Pancreas (tissue), 10 donors: ENCODE measurements at regions of chr14 and their contacts with region 1.

Region 1: GRCh38 chr14:99266181-99267178 is 5.5 kb downstream of the BCL11B start:
- DNase-seq: peak; percentile 28 to 91 (median 76)
- ATAC-seq: peak; percentile 85 to 98 (median 94)
- H3K4me3 ChIP-seq: no peak overlapping the region
- H3K27ac ChIP-seq: no peak overlapping the region
- H3K4me1 ChIP-seq: peaks cover 0 to 3% (median 2%) of the 10 kb centered on the region in 3 donors
- H3K27me3 ChIP-seq: peaks cover 0 to 35% (median 2%) of the 10 kb centered on the region in 4 donors
- CTCF ChIP-seq: peak; percentile 85 to 92 (median 90)

Region 2: DNA sequence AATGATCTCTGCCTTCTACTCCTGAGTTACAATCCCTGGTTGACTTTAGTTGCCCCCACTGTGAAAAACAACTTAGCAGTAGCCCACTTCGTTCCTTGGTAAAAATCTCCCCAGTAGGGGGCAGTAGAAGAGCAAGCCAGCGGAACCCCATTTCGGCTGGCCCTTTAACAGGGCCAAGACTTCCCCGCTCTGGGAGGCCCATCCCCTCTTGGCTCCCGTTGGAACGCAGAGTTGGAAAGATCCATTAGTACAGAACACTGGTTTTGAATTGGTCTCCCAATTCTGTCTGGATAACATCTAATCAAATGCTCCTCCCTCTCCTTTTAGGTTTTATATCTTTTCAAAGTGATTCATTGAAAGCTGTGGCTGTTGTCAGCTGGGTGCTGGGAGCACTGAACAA is 1127.8 kb before region 1 on chr14:
- intact Hi-C with region 1: loop called in 2 of 3 experiments (anchors 10 kb)
- DNase-seq: peak in 2 of 6 donors; percentile 16 to 23
- ATAC-seq: peak in 3 of 4 donors; percentile 44 to 72 (median 56)
- H3K4me3 ChIP-seq: no peak overlapping the region
- H3K27ac ChIP-seq: no peak overlapping the region
- H3K4me1 ChIP-seq: no peaks in the 10 kb centered on the region
- H3K27me3 ChIP-seq: no peaks in the 10 kb centered on the region
- CTCF ChIP-seq: peak in 3 of 4 donors; percentile 34 to 43 (median 34)

Region 3: DNA sequence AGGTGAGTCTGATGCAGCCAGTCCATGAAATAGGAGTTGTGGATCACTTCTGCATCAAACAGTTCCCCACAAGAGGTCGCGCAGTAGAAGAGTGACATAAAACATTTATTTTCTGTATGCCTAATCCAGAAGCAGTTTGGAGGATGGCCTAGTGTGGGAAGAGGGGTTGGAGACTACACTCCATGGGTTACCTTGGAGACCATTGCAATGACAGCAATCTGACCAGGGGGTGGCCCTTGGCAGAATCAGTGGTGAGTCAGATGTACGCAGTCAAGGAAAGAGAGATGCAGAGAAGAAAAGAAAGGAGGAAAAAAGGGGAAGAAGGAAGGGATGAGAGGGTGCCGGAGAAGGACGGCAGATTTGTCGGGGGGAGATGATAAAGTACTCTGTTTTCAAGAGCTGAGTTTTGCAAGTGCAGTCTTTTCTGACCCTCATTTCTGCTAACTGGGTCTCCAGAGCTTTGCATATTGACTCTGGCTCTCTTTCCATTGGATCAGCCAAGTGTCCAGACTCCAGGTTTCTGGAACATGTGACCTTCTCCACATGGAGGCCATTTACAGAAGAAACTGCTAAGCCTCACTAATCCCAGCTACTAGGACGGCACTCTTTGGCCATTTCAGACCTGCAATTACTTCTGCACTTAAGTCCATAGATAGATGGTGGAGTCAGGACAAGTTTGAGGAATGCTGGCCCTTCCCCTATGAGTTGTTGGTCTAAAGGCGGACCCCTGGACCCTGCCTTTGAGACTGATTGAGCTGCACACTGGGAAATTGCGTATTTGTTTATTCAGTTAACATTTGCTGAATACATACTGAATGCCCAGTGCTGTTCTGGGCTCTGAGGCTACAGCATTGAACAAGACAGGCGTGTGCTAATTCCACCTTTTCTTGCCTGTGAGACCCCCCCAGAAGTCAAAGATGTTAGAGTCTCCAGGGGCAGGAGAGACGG is 418.7 kb before region 1 on chr14:
- intact Hi-C with region 1: no loop called
- DNase-seq: no peak
- ATAC-seq: no peak
- H3K4me3 ChIP-seq: no peak overlapping the region
- H3K27ac ChIP-seq: no peak overlapping the region
- H3K4me1 ChIP-seq: no peaks in the 10 kb centered on the region
- H3K27me3 ChIP-seq: no peaks in the 10 kb centered on the region
- CTCF ChIP-seq: no peak

Region 4: DNA sequence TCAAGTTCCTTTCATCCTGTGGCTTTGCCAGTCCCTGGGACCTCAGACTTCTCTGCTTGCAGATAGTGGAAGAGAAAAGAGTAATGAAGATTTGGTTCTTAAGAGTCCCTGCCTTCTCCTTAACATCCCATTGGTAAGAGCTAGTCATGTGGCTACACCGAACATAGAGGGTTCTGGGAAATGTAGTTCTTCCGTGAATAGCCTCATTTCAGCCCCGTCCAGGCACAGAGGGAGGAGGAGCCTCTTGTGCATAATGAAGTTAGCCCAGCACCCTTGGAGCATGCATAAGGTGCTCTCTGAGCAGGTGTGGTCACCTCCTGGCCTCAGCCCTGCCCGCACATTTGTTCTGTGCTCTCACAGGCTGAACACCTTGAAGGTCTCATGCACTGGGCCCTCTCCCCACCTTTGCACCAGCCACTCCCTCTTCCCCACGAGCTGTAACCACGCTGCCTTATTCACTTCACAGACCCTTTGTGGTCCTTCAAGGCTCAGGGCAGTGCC is 128.4 kb before region 1 on chr14:
- intact Hi-C with region 1: no loop called
- DNase-seq: no peak
- ATAC-seq: no peak
- H3K4me3 ChIP-seq: no peak overlapping the region
- H3K27ac ChIP-seq: no peak overlapping the region
- H3K4me1 ChIP-seq: no peaks in the 10 kb centered on the region
- H3K27me3 ChIP-seq: no peaks in the 10 kb centered on the region
- CTCF ChIP-seq: no peak

Region 5: DNA sequence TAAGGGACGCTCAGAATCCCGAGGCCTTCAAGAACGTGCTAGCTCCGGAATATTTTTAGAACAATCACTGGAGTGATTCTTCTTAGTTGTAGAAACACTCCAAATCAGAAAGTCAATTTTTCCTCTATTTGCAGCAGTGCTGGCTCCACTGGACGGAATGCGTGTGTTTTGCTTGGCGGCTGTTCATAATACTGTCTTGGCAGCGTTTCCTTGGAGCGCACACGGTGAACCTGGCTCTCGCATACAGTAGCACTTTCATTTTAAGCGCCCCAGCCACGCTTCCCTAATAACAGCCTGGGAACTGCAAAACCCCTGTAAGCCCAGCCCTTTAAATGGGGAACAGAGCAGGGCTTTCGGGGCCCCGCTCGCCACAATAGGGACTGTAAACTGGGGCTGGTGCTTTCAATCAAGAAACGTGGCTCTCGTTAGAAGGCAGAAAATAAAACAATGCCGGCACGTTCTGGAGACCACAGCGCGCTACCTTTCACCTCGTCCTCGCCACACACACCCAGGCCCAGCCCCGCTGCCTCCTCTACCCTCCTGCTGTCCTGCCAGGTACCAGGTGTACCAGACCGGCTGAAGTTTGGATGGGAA is 74.4 kb before region 1 on chr14:
- intact Hi-C with region 1: no loop called
- DNase-seq: peak in 4 of 6 donors; percentile 57 to 68 (median 59)
- ATAC-seq: peak; percentile 93 to 98 (median 96)
- H3K4me3 ChIP-seq: peak overlapping the region in 3 of 4 donors; percentile 14 to 39 (median 33)
- H3K27ac ChIP-seq: peak overlapping the region in 1 of 4 donors; percentile 5
- H3K4me1 ChIP-seq: peaks cover 0 to 5% (median 5%) of the 10 kb centered on the region in 3 donors
- H3K27me3 ChIP-seq: no peaks in the 10 kb centered on the region
- CTCF ChIP-seq: no peak

Region 6: DNA sequence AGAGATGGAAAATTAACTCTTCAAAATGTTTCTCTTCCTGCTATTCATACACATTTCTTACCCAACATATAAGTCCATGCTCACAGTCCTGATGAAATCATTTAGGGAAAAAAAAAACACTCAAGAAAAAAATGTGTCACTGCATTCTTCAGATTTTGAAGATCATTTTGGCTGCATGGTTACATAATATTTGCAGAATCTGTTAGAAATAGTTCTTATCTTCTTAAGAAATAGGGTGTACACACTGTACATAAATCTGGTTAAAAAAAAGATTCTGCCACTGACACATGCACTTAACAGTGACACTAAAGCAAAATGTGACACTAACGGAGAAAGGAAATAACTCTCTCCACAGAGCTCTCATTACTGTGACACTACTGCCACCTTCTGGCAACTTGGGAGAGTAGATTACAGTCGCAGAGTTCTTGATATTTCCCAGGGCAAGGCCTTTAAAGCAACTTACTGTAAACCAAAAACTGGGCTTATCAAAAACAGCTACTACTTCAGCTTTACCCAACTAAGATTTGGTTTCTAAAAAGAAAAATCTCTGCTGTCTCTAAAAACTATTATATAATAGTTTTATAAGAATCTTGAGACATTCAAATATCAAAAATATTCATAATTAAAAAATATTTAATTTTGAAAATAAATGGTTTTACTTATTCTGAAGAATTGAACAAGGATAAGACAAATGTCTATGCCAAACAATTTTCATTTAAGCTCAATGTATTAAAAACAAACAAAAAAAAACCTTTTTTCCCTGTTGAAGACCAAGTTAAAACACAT is 149.2 kb after region 1 on chr14:
- intact Hi-C with region 1: no loop called
- DNase-seq: peak in 3 of 6 donors; percentile 44 to 68 (median 50)
- ATAC-seq: peak; percentile 79 to 98 (median 94)
- H3K4me3 ChIP-seq: no peak overlapping the region
- H3K27ac ChIP-seq: no peak overlapping the region
- H3K4me1 ChIP-seq: peaks cover 0 to 2% (median 0%) of the 10 kb centered on the region in 3 donors
- H3K27me3 ChIP-seq: no peaks in the 10 kb centered on the region
- CTCF ChIP-seq: peak; percentile 65 to 71 (median 66)